ENCODE measurements at regions of chrX and their contacts with region 1.

Region 1: GRCh38 chrX:109890895-109891502 is 111.9 kb upstream of the TMEM164 start:
- DNase-seq: peak; percentile 53
- H3K4me3 ChIP-seq: no peak overlapping the region
- H3K27ac ChIP-seq: no peak overlapping the region
- H3K4me1 ChIP-seq: no peaks in the 10 kb centered on the region
- H3K27me3 ChIP-seq: no peaks in the 10 kb centered on the region
- CTCF ChIP-seq: peak; percentile 71 to 72
- POLR2A ChIP-seq: no peak

Region 2: GRCh38 chrX:109485470-109486340 is 405.3 kb before region 1 on chrX:
- CTCF ChIA-PET with region 1: interaction called, 49 read pairs
- POLR2A ChIA-PET with region 1: no interaction called
- dilution Hi-C with region 1: no loop called
- intact Hi-C with region 1: loop called (anchors 1 kb)
- DNase-seq: peak; percentile 77
- H3K4me3 ChIP-seq: no peak overlapping the region
- H3K27ac ChIP-seq: no peak overlapping the region
- H3K4me1 ChIP-seq: no peaks in the 10 kb centered on the region
- H3K27me3 ChIP-seq: peaks cover 5 to 6% of the 10 kb centered on the region in 2 experiments
- CTCF ChIP-seq: peak; percentile 71 to 83
- POLR2A ChIP-seq: no peak

Region 3: GRCh38 chrX:109635176-109635575 is 255.8 kb before region 1 on chrX:
- CTCF ChIA-PET with region 1: interaction called, 22 read pairs
- POLR2A ChIA-PET with region 1: no interaction called
- dilution Hi-C with region 1: no loop called
- intact Hi-C with region 1: no loop called
- DNase-seq: peak; percentile 31
- H3K4me3 ChIP-seq: no peak overlapping the region
- H3K27ac ChIP-seq: no peak overlapping the region
- H3K4me1 ChIP-seq: no peaks in the 10 kb centered on the region
- H3K27me3 ChIP-seq: no peaks in the 10 kb centered on the region
- CTCF ChIP-seq: peak; percentile 32 to 48
- POLR2A ChIP-seq: no peak

Region 4: GRCh38 chrX:109714340-109714958 is 176.6 kb before region 1 on chrX:
- CTCF ChIA-PET with region 1: interaction called, 101 read pairs
- POLR2A ChIA-PET with region 1: no interaction called
- dilution Hi-C with region 1: no loop called
- intact Hi-C with region 1: loop called (anchors 1 kb)
- DNase-seq: peak; percentile 50
- H3K4me3 ChIP-seq: no peak overlapping the region
- H3K27ac ChIP-seq: peak overlapping the region; percentile 66
- H3K4me1 ChIP-seq: peaks cover 25% of the 10 kb centered on the region
- H3K27me3 ChIP-seq: no peaks in the 10 kb centered on the region
- CTCF ChIP-seq: no peak
- POLR2A ChIP-seq: no peak

Region 5: GRCh38 chrX:109911046-109911445 is 20.0 kb after region 1 on chrX:
- CTCF ChIA-PET with region 1: interaction called, 10 read pairs
- POLR2A ChIA-PET with region 1: no interaction called
- dilution Hi-C with region 1: no loop called
- intact Hi-C with region 1: no loop called
- DNase-seq: peak; percentile 27
- H3K4me3 ChIP-seq: no peak overlapping the region
- H3K27ac ChIP-seq: no peak overlapping the region
- H3K4me1 ChIP-seq: no peaks in the 10 kb centered on the region
- H3K27me3 ChIP-seq: no peaks in the 10 kb centered on the region
- CTCF ChIP-seq: peak; percentile 17 to 18
- POLR2A ChIP-seq: no peak

Region 6: DNA sequence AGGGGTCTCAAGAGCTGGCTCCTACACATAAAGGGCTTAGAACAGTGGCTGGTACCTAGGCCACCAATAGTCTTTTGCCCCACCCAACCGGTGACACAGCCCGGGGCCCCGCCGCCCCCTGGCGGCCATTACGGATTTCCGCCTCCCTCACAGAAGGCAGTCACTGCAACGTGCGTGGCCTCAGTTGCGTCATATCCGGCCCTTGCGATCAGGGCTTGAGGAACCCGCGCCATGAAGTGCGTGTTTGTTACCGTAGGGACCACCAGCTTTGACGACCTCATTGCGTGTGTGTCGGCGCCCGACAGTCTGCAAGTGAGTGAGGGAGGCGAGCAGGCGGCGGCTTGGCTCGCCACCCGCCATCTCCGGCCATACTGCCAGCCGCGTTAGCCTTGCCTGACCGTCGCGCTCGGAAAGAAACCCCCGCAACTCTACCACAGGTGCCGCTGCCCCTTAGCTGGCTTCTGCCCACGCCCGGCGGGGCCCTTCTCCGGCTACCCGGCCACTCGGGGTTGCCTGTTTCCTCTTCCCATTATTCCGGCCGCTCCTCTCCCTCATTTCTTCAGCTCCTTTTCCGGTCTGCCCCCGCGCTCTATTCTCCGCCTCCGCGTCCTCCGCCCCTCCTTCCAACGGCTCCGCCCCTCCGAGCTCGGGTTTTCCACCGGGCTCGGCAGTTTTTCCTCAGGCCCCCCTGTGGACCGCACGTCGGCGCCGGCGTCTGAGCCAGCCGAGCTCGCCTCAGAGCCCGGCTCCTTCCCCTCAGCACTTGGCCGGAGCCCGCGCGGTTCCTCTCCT is 1790.2 kb after region 1 on chrX and contains the start of gene ALG13:
- CTCF ChIA-PET with region 1: no interaction called
- POLR2A ChIA-PET with region 1: no interaction called
- dilution Hi-C with region 1: no loop called
- intact Hi-C with region 1: no loop called
- DNase-seq: peak; percentile 85
- H3K4me3 ChIP-seq: peak within 1 kb of the TSS; percentile 79 to 90 (median 84)
- H3K27ac ChIP-seq: peak within 1 kb of the TSS; percentile 99
- H3K4me1 ChIP-seq: peaks cover 11% of the 10 kb centered on the region
- H3K27me3 ChIP-seq: no peaks in the 10 kb centered on the region
- CTCF ChIP-seq: peak; percentile 57 to 72
- POLR2A ChIP-seq: peak; percentile 73
- total RNA-seq, gene ALG13: 37.9 and 38.2 TPM in 2 replicates